AG04450 (cell line): ENCODE measurements at regions of chr1 and their contacts with region 1.

Region 1: GRCh38 chr1:156728597-156729462 is at the start of gene ISG20L2:
- DNase-seq: peak; percentile 96
- H3K4me3 ChIP-seq: peak within 1 kb of the TSS; percentile 100
- H3K27ac ChIP-seq: peak within 1 kb of the TSS; percentile 95
- H3K27me3 ChIP-seq: no peaks in the 10 kb centered on the region
- CTCF ChIP-seq: 0 out of 2 replicates have a peak, but pooled peaks have one; percentile 13
- polyA plus RNA-seq, gene ISG20L2: 25.6 and 29.1 TPM in 2 replicates

Region 2: GRCh38 chr1:156659994-156660751 is 68.7 kb before region 1 on chr1:
- CTCF ChIA-PET with region 1: interaction called, 70 read pairs
- POLR2A ChIA-PET with region 1: interaction called, 5 read pairs
- DNase-seq: peak; percentile 97
- H3K4me3 ChIP-seq: peak overlapping the region; percentile 25; the same call in 1 of the 2 replicates
- H3K27ac ChIP-seq: peak overlapping the region; percentile 86
- H3K27me3 ChIP-seq: peaks cover 23% of the 10 kb centered on the region
- CTCF ChIP-seq: peak; percentile 95

Region 3: DNA sequence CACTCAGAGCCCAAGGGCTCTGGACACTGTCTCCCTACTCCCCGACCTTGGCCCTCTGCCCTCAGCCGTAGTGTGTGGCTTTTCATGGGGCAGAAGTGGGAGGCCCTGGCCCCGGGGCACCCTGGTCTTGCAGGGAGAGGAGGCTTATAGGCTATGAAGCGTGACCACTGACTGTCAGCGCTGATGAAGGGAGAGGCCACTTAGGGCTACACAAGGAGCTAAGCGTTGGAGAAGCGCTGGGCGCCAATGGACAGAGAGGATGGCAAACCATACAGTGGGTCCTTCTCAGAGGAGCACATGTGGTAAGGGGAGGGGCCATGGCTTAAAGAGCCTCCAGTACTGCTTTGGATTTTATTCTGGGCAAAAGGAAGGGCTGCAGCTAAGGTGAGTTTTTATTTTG is 31.3 kb before region 1 on chr1:
- CTCF ChIA-PET with region 1: interaction called, 616 read pairs
- POLR2A ChIA-PET with region 1: no interaction called
- DNase-seq: no peak
- H3K4me3 ChIP-seq: no peak overlapping the region
- H3K27ac ChIP-seq: no peak overlapping the region
- H3K27me3 ChIP-seq: no peaks in the 10 kb centered on the region
- CTCF ChIP-seq: no peak

Region 4: DNA sequence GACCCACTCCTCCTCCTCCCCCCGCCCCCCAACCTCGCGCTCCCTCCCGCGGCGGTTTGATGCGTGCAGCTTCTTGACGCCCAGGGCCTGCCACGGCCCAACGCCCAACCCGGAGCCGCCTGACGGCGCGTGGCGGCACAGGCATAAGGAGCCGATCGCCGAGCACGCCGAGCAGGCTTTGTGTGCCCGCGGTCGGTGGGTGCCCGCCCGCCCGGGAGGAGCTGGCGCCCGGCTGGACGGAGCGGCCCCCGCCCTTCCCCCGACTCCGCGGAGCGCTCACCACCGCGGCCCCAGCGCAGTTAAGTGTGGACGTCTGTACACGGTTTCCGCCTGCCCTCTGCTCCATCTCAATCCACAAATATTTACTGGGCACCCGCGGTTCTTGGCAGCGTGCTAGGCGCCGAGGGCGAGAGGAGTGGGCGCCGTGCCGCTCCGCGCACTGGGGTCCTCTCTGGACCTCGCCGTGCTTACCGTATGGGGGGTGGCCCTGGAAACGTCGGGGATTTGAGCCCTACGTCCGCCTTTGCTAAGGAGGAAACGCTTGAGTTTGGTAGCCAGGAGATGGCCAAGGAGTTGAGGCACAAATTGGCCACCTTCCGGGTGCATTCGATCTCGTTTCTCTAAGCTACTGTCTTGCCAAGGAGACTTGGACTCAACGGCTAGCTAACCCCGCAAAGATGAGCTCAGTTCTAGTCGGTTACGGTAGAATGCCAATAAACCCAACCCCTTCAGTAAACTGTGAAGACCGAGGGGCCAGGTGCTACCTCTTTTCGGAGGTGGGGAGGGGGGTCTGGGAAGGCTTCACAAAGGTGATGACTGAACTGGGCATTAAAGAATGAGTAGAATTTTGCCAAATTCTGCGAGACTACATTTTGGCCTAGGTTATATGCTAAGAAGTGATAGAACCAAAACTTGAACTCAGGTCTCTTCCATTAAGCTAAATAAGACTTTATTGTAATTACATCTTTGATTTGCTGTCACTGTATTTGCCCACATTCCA is 23.2 kb after region 1 on chr1:
- CTCF ChIA-PET with region 1: interaction called, 10 read pairs
- POLR2A ChIA-PET with region 1: interaction called, 20 read pairs
- DNase-seq: peak; percentile 91
- H3K4me3 ChIP-seq: peak overlapping the region; percentile 94
- H3K27ac ChIP-seq: peak overlapping the region; percentile 77
- H3K27me3 ChIP-seq: no peaks in the 10 kb centered on the region
- CTCF ChIP-seq: no peak

Region 5: DNA sequence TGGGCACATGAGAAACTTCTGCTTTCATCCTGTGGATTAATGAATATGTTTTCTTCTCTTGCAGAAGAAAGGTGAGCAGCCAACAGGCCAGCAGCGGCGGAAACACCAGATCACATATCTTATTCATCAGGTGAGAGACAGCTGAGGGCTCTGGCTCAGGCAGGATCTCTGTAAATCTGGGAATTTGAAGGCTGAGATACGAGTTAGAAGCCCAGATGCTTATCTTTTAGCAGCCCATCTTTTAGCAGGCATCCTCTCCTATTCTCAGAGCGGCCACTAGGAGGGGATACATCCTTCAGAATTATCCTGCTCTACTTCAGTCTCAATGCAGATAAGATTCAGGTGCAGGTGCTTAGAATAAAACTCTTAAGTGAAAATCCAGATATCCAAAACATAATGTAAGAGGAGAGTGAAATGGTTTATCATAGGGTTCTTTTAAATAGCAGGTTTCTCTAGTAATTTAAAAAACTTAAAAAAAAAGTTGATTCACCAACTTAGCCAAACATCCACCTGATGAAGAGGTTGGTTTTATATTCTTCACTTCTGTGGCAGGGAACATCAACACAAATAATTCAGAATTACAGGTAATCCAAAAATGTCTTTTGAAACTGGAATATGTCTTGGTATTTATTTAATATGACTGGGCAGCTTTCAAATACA is 68.5 kb after region 1 on chr1:
- CTCF ChIA-PET with region 1: interaction called, 14 read pairs
- POLR2A ChIA-PET with region 1: interaction called, 3 read pairs
- DNase-seq: peak; percentile 26
- H3K4me3 ChIP-seq: no peak overlapping the region
- H3K27ac ChIP-seq: no peak overlapping the region
- H3K27me3 ChIP-seq: no peaks in the 10 kb centered on the region
- CTCF ChIP-seq: peak; percentile 94

Region 6: DNA sequence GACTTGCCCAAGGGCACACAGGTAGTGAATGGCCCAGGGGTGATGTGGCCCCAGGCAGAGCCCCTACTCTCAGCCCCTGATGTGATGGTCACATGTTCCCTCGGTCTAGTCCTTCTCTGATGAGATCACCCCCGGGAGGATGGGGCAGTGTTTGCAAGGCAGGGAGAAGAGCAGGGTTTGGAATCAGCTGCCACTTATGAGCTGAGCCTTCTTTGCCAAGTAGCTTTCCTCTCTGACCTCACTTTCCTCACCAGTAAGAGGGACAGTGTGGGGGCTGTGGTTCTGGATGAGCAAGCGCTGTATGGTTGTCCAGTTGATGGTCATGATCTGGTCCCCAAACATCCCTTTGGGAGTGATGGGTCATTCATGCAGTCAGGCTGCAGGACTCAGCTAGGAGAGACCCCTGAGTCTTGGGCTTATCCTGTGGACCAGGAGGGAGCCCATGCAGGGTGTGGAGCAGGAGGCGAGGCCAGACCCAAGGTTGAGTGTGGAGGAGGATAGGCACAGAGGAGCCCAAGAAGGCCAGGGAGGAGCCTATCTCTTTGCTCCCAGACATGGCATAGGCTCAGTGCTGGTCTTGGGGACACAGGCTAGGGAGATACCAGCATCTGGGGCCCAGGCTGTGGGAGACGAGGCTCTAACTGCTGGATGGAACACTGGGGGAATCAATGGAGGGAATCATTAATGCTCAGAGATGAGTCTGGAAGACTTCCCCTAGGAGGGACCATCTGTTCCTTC is 148.8 kb after region 1 on chr1:
- CTCF ChIA-PET with region 1: no interaction called
- POLR2A ChIA-PET with region 1: no interaction called
- DNase-seq: no peak
- H3K4me3 ChIP-seq: no peak overlapping the region
- H3K27ac ChIP-seq: no peak overlapping the region
- H3K27me3 ChIP-seq: peaks cover 72% of the 10 kb centered on the region
- CTCF ChIP-seq: no peak

Region 7: GRCh38 chr1:156892190-156893047 is 163.6 kb after region 1 on chr1:
- CTCF ChIA-PET with region 1: interaction called, 64 read pairs
- POLR2A ChIA-PET with region 1: no interaction called
- DNase-seq: peak; percentile 68
- H3K4me3 ChIP-seq: peak overlapping the region; percentile 41
- H3K27ac ChIP-seq: peak overlapping the region; percentile 61
- H3K27me3 ChIP-seq: peaks cover 6% of the 10 kb centered on the region
- CTCF ChIP-seq: peak; percentile 82